CD14-positive monocyte (primary cell): ENCODE measurements at regions of chr3 and their contacts with region 1.

Region 1: GRCh38 chr3:127831723-127832172 is 9.4 kb upstream of the MGLL start:
- DNase-seq: peak; percentile 48 to 61 (median 53)
- H3K4me3 ChIP-seq: no peak overlapping the region
- H3K4me3 Mint-ChIP-seq: no peak overlapping the region
- H3K27ac ChIP-seq: no peak overlapping the region
- H3K27ac Mint-ChIP-seq: no peak overlapping the region
- H3K4me1 ChIP-seq: no peaks in the 10 kb centered on the region
- H3K4me1 Mint-ChIP-seq: peaks cover 3% of the 10 kb centered on the region
- H3K27me3 ChIP-seq: no peaks in the 10 kb centered on the region
- H3K27me3 Mint-ChIP-seq: peaks cover 0 to 2% (median 1%) of the 10 kb centered on the region in 3 donors
- CTCF ChIP-seq: peak; percentile 81

Region 2: DNA sequence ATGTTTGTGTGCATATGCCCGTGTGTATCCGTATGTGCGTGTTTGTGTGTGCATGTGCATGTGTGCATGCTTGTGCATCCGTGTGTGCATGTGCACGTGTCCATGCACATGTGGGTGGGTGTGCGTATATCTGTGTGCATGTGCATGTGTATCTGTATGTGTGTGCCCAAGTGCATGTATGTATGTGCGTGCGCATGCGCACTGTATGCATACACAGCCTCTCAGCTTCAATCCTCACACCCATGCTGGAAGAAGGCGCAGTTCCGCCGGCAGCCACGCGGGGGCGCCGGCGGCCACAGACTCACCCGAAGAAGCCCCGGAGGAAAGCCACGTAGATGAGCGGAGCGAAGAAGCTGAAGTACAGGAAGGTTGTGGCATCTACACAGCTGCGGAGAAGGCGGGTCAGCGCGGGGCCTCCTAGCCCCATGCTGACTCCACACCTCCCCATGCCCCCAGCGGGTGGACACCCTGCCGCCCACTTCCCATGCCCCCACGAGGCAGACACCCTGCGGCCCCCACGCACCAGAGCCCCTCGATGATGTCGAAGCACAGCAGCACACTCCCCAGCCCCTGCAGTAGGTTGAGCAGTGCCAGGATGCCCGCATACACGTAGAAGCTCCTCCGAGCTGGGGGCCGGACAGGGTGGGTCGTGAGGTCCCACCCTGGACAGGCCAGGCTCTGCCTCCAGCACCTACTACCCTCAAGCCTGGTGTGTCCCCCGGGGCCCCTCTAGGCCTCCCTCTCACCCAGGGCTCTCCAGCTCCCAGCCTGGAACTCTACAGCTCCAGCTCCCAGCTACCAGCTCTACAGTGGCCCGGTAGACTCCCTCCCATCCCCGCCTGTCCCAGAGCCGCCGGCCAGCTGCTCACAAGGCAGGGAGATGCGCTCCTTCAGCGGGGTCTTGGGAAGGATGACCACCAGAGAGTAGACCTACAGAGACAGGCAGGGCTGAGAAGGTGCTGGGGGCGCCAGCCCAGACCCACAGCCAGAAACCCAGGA is 256.6 kb before region 1 on chr3:
- intact Hi-C with region 1: loop called in 1 of 2 experiments (anchors 5 kb)
- DNase-seq: peak; percentile 80 to 88 (median 85)
- H3K4me3 ChIP-seq: no peak overlapping the region
- H3K4me3 Mint-ChIP-seq: no peak overlapping the region
- H3K27ac ChIP-seq: no peak overlapping the region
- H3K27ac Mint-ChIP-seq: peak overlapping the region in 4 of 7 donors; percentile 36 to 50 (median 44)
- H3K4me1 ChIP-seq: peaks cover 3 to 5% of the 10 kb centered on the region in 2 donors
- H3K4me1 Mint-ChIP-seq: peaks cover 6% of the 10 kb centered on the region
- H3K27me3 ChIP-seq: no peaks in the 10 kb centered on the region
- H3K27me3 Mint-ChIP-seq: peaks cover 0 to 1% (median 0%) of the 10 kb centered on the region in 3 donors
- CTCF ChIP-seq: peak; percentile 90

Region 3: DNA sequence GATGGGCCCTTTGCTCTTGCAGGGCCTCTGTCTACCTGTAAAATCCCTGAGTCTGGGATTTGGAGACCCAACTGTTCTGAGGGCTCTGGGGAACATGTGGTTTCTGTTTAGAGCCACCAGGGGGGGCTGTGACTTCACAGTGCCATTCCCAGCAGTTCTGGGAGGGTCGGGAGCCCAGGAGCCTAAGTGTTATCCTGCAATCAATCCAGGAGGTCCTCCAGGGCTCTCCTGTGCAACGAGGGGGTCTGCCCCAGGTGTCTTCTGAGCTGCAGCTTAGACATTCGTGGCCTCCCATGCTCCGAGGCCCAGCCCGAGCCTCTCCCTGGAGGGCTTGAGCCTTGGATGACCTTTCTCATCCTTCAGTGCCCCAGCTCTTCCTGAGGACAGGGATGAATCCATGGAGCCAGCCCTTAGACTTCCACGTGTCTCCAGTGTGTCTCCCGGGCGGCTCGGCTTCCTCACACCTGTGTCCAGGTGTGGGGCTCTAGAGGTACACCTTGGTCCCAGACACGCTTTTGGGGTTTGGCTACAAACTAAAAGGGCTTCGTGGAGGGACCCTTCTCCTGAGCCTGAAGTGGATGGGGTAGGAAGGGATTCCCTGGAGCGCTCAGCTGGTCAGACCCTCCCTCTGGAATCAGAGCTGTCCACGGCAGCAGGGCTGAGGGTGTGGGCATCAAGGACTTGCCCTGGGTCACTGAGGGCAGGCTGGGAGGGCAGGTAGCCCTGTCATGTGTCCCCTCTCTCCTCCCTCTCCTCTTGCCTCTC is 179.3 kb before region 1 on chr3:
- intact Hi-C with region 1: loop called in 1 of 2 experiments (anchors 5 kb)
- DNase-seq: peak; percentile 38 to 67 (median 66)
- H3K4me3 ChIP-seq: no peak overlapping the region
- H3K4me3 Mint-ChIP-seq: no peak overlapping the region
- H3K27ac ChIP-seq: no peak overlapping the region
- H3K27ac Mint-ChIP-seq: peak overlapping the region in 1 of 7 donors; percentile 20
- H3K4me1 ChIP-seq: no peaks in the 10 kb centered on the region
- H3K4me1 Mint-ChIP-seq: peaks cover 4% of the 10 kb centered on the region
- H3K27me3 ChIP-seq: no peaks in the 10 kb centered on the region
- H3K27me3 Mint-ChIP-seq: peaks cover 2 to 7% (median 2%) of the 10 kb centered on the region in 3 donors
- CTCF ChIP-seq: peak; percentile 94

Region 4: DNA sequence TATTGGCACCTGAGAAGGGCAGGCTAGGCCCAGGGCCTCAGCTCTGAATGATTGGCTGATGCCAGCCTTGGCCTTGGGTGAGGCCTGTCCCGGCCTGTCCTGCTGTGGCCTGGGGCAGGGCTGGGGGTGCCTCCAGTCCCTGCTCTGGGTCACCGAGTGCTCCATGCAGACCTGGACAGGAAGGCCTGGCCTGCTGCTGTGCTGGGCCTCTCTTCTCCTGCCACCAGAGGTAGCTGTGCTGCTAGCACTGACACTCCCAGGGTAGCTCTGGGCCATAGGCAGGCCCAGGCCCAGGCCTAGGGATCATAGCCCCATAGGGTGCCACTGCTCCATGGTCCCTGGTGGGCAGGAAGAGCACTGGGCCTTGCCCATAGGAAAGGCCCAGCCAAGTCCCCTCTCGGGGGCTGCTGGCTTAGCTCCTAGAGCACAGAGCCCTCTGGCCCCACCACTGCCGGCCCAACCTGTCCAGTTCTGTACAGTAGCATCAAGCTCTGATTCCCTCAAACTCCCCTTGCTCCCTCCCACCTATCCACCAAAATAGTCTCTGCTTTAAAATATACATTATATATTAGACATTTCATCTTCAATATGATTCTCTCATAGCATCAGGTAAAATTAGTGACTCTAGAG is 140.8 kb before region 1 on chr3:
- intact Hi-C with region 1: loop called (anchors 1 to 5 kb)
- DNase-seq: peak; percentile 27 to 53 (median 32)
- H3K4me3 ChIP-seq: no peak overlapping the region
- H3K4me3 Mint-ChIP-seq: no peak overlapping the region
- H3K27ac ChIP-seq: no peak overlapping the region
- H3K27ac Mint-ChIP-seq: peak overlapping the region in 1 of 7 donors; percentile 25
- H3K4me1 ChIP-seq: no peaks in the 10 kb centered on the region
- H3K4me1 Mint-ChIP-seq: peaks cover 2% of the 10 kb centered on the region
- H3K27me3 ChIP-seq: no peaks in the 10 kb centered on the region
- H3K27me3 Mint-ChIP-seq: peaks cover 0 to 1% (median 1%) of the 10 kb centered on the region in 3 donors
- CTCF ChIP-seq: peak; percentile 48

Region 5: GRCh38 chr3:127697551-127698240 is 134.1 kb before region 1 on chr3:
- intact Hi-C with region 1: loop called in 1 of 2 experiments (anchors 1 kb)
- DNase-seq: peak; percentile 41 to 61 (median 51)
- H3K4me3 ChIP-seq: peak overlapping the region in 1 of 3 experiments; percentile 20
- H3K4me3 Mint-ChIP-seq: peak overlapping the region in 1 of 2 donors; percentile 51
- H3K27ac ChIP-seq: peak overlapping the region in 1 of 2 donors; percentile 31
- H3K27ac Mint-ChIP-seq: peak overlapping the region in 6 of 7 donors; percentile 38 to 86 (median 67)
- H3K4me1 ChIP-seq: peaks cover 16 to 18% of the 10 kb centered on the region in 2 donors
- H3K4me1 Mint-ChIP-seq: peaks cover 14% of the 10 kb centered on the region
- H3K27me3 ChIP-seq: no peaks in the 10 kb centered on the region
- H3K27me3 Mint-ChIP-seq: peaks cover 0 to 1% (median 1%) of the 10 kb centered on the region in 3 donors
- CTCF ChIP-seq: no peak

Region 6: GRCh38 chr3:127848131-127849129 is 16.7 kb after region 1 on chr3:
- intact Hi-C with region 1: no loop called
- DNase-seq: no peak
- H3K4me3 ChIP-seq: no peak overlapping the region
- H3K4me3 Mint-ChIP-seq: no peak overlapping the region
- H3K27ac ChIP-seq: no peak overlapping the region
- H3K27ac Mint-ChIP-seq: no peak overlapping the region
- H3K4me1 ChIP-seq: no peaks in the 10 kb centered on the region
- H3K4me1 Mint-ChIP-seq: no peaks in the 10 kb centered on the region
- H3K27me3 ChIP-seq: no peaks in the 10 kb centered on the region
- H3K27me3 Mint-ChIP-seq: peaks cover 2 to 5% (median 5%) of the 10 kb centered on the region in 3 donors
- CTCF ChIP-seq: no peak